Activated T-helper 1 cell treated with anti-CD3 and anti-CD28 coated beads, Interleukin-12 subunit alpha, Interleukin-12 subunit beta, Interleukin-2, Interleukin-4 antibody, amounts not matched to agents 30 ng/mL and 10 ng/mL and 1 ng/mL, durations not matched to agents 14 hours and 24 hours and 36 hours (primary cell): ENCODE measurements at regions of chr11 and their contacts with region 1.

Region 1: DNA sequence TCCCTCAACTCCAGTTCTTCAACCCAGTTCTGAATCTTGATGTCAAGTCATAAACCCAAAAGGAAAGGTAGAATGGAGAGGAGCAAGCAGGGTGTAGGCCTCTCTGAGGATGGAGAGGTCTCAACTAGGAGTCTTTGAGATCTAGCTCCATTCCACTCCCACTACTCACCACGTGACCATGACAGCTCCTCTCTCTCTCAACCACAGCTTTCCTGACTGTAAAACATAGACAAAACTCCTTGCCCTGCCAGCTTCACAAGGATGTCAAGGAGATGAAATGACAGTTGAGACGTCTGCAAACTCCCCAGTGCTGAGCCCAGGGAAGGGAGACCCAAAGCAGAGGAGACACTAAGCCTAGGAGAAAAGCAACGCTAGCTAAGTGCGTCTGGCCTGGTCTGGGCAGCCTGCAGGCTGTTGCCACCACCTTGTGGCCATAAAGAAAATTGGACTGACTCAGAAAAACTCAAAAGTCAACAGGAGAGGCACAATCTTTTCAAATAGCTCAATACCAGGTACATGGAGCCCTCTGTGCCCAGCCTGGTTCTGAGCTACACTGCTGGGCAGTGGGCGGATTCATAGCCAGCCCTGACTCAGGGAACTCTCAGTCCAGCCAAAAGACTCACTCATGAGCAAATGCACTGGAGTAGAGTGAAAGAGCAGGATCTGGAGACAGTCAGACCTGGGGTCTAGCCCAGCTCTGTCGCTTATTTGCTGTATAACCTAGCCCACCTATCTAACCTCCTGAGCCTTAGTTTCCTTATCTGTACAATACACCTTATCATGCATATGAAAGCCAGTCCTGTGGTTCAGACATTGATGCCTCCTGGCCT is 3.4 kb downstream of the CLPB start:
- DNase-seq: peak; percentile 32
- H3K4me3 Mint-ChIP-seq: no peak overlapping the region
- H3K27ac Mint-ChIP-seq: peak overlapping the region; percentile 14
- H3K4me1 Mint-ChIP-seq: peaks cover 40% of the 10 kb centered on the region
- H3K27me3 Mint-ChIP-seq: no peaks in the 10 kb centered on the region

Region 2: DNA sequence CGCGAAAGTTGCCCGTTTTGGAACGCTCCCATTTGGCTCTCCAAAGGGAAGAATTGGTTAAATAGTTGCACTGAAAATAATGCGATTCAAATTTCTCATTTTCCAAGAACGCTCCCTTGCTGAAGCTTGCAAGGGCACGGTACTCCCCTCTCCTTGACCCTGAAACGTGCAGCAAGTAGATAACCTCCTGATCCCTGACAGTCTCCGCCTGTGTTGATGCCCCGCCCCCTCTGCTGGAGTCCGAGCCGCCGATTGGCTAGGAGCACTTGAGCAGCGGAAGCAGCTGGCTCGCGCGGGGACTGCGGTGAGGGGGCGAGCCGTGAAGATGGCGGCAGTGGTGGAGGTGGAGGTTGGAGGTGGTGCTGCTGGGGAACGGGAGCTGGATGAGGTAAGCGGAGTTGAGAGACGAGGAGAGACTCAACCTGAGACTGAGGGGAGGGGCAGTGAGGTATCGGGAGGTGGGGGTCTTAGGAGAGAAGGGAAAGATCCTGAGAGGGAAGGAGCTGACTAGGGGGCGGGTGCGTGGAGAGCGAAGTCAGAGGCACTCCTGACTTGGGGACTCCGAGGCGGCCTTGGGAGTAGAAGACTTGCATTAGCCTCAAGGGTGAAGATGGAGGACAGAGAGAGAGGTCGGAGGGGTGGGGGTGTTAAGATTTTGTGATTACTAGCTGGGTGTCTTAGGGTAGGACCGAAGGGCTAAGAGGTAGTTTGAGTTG is 502.1 kb before region 1 on chr11 and contains the start of gene RNF121:
- intact Hi-C with region 1: loop called (anchors 1 kb)
- DNase-seq: peak; percentile 96
- H3K4me3 Mint-ChIP-seq: peak within 1 kb of the TSS; percentile 98
- H3K27ac Mint-ChIP-seq: peak within 1 kb of the TSS; percentile 95
- H3K4me1 Mint-ChIP-seq: peaks cover 51% of the 10 kb centered on the region
- H3K27me3 Mint-ChIP-seq: no peaks in the 10 kb centered on the region
- total RNA-seq, gene RNF121: 65.8 and 70.3 TPM in 2 replicates

Region 3: GRCh38 chr11:72102946-72103753 is 327.8 kb before region 1 on chr11 and contains the start of gene LAMTOR1:
- intact Hi-C with region 1: loop called (anchors 2 kb)
- DNase-seq: peak; percentile 97
- H3K4me3 Mint-ChIP-seq: peak within 1 kb of the TSS; percentile 95
- H3K27ac Mint-ChIP-seq: peak within 1 kb of the TSS; percentile 87
- H3K4me1 Mint-ChIP-seq: peaks cover 41% of the 10 kb centered on the region
- H3K27me3 Mint-ChIP-seq: no peaks in the 10 kb centered on the region
- total RNA-seq, gene LAMTOR1: 70.2 and 77.7 TPM in 2 replicates

Region 4: GRCh38 chr11:72222907-72223614 is 207.9 kb before region 1 on chr11:
- intact Hi-C with region 1: loop called (anchors 1 kb)
- DNase-seq: peak; percentile 95
- H3K4me3 Mint-ChIP-seq: peak overlapping the region; percentile 85
- H3K27ac Mint-ChIP-seq: peak overlapping the region; percentile 83
- H3K4me1 Mint-ChIP-seq: peaks cover 20% of the 10 kb centered on the region
- H3K27me3 Mint-ChIP-seq: peaks cover 4% of the 10 kb centered on the region

Region 5: DNA sequence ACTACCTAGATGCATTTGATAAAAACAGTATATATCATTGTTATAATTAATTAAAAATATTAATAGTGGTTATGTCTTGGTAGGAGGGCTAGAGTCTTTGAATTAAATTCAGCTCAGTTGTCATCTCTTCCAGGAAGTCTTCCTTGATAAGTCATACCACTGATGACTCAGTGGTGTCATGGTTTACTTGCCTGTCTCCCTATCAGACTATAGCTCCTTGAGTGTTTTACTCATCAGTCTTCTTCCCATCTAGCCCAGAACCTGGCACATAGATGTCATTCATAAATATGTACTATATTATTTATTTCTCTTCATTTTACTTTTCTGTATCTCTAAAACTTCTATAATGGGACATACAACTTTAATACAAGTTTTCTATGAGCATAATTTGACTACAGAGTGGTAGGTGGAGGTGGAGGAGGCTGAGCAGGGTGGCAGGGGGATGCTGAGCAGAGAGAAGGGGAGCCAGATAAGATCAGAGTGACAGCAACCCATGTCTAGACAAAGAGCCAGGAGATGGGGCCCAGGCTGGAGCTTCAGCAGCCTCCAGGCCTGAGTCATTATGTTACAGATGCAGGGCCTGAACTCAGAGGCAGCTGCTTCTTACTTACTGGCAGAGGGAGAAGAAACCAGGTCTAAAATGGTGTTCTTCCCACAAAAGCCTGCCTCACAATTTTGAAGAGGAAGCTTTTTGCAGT is 104.7 kb before region 1 on chr11:
- intact Hi-C with region 1: loop called (anchors 1 kb)
- DNase-seq: no peak
- H3K4me3 Mint-ChIP-seq: no peak overlapping the region
- H3K27ac Mint-ChIP-seq: peak overlapping the region; percentile 91
- H3K4me1 Mint-ChIP-seq: peaks cover 39% of the 10 kb centered on the region
- H3K27me3 Mint-ChIP-seq: no peaks in the 10 kb centered on the region

Region 6: GRCh38 chr11:72814286-72815109 is 383.5 kb after region 1 on chr11 and contains the start of gene ATG16L2:
- intact Hi-C with region 1: loop called (anchors 5 kb)
- DNase-seq: peak; percentile 90
- H3K4me3 Mint-ChIP-seq: peak within 1 kb of the TSS; percentile 99
- H3K27ac Mint-ChIP-seq: peak within 1 kb of the TSS; percentile 98
- H3K4me1 Mint-ChIP-seq: peaks cover 54% of the 10 kb centered on the region
- H3K27me3 Mint-ChIP-seq: no peaks in the 10 kb centered on the region
- total RNA-seq, gene ATG16L2: 69.2 and 71.1 TPM in 2 replicates